H1 (cell line): ENCODE measurements at regions of chr15 and their contacts with region 1.

Region 1: DNA sequence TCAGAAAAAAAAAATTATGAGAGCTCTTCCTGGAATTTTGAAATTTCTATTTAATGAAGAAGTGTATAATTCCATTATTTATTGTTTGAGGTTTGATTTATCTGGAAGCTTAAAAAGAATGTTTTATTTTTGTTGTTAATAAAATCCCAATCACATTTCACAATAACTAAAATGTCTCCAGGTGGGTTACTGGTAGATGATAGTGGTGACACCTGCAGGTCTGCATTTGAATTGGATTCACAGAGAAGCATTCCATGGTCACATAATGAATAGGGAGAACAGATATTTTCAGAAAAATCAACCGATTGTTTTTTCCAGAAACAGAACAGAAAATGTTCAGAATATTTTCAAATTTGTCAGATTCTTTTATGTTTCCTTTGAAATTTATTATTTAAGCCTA is 48.3 kb downstream of the ASB7 start:
- DNase-seq: no peak
- H3K4me3 ChIP-seq: no peak overlapping the region
- H3K27ac ChIP-seq: no peak overlapping the region
- H3K4me1 ChIP-seq: peaks cover 0 to 3% (median 1%) of the 10 kb centered on the region in 4 experiments; a peak in 1 of 7 replicates
- H3K27me3 ChIP-seq: no peaks in the 10 kb centered on the region
- CTCF ChIP-seq: peak in 2 of 3 experiments; percentile 18 to 38; a peak in 2 of 4 replicates
- EP300 ChIP-seq: no peak
- POLR2A ChIP-seq: no peak
- RAD21 ChIP-seq: peak; percentile 29 to 41; a peak in 3 of 4 replicates

Region 2: DNA sequence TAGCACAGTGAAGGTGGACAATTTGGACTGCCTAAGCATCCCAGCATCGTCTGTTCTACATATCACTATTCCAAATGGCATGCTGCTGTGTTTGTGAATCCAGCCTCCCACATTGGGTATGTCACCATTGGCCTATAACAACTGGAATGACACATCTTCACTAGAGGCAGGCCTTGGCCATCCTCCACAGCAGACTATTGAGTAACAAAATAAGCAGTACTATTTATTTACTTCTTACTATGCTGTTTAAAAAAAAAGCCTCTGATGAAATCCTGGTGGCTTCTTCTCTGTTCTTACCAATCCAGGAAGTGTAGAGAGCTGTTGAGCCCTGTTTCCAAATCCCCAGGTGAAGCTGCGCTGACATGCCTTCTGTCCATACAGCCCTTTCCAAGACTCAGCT is 91.4 kb before region 1 on chr15:
- CTCF ChIA-PET with region 1: no interaction called
- POLR2A ChIA-PET with region 1: no interaction called
- DNase-seq: no peak
- H3K4me3 ChIP-seq: no peak overlapping the region
- H3K27ac ChIP-seq: no peak overlapping the region
- H3K4me1 ChIP-seq: no peaks in the 10 kb centered on the region
- H3K27me3 ChIP-seq: no peaks in the 10 kb centered on the region
- CTCF ChIP-seq: no peak
- EP300 ChIP-seq: no peak
- POLR2A ChIP-seq: no peak
- RAD21 ChIP-seq: no peak

Region 3: GRCh38 chr15:100580414-100580813 is 70.3 kb before region 1 on chr15:
- CTCF ChIA-PET with region 1: no interaction called
- POLR2A ChIA-PET with region 1: no interaction called
- DNase-seq: no peak
- H3K4me3 ChIP-seq: no peak overlapping the region
- H3K27ac ChIP-seq: no peak overlapping the region
- H3K4me1 ChIP-seq: no peaks in the 10 kb centered on the region
- H3K27me3 ChIP-seq: no peaks in the 10 kb centered on the region
- CTCF ChIP-seq: no peak
- EP300 ChIP-seq: no peak
- POLR2A ChIP-seq: no peak
- RAD21 ChIP-seq: no peak

Region 4: GRCh38 chr15:100627789-100628395 is 22.8 kb before region 1 on chr15:
- CTCF ChIA-PET with region 1: interaction called, 15 read pairs
- POLR2A ChIA-PET with region 1: no interaction called
- DNase-seq: peak; percentile 38 to 74
- H3K4me3 ChIP-seq: no peak overlapping the region
- H3K27ac ChIP-seq: no peak overlapping the region
- H3K4me1 ChIP-seq: no peaks in the 10 kb centered on the region; a peak in 1 of 7 replicates
- H3K27me3 ChIP-seq: no peaks in the 10 kb centered on the region
- CTCF ChIP-seq: peak; percentile 39 to 82 (median 69)
- EP300 ChIP-seq: no peak
- POLR2A ChIP-seq: no peak
- RAD21 ChIP-seq: peak; percentile 88 to 91

Region 5: DNA sequence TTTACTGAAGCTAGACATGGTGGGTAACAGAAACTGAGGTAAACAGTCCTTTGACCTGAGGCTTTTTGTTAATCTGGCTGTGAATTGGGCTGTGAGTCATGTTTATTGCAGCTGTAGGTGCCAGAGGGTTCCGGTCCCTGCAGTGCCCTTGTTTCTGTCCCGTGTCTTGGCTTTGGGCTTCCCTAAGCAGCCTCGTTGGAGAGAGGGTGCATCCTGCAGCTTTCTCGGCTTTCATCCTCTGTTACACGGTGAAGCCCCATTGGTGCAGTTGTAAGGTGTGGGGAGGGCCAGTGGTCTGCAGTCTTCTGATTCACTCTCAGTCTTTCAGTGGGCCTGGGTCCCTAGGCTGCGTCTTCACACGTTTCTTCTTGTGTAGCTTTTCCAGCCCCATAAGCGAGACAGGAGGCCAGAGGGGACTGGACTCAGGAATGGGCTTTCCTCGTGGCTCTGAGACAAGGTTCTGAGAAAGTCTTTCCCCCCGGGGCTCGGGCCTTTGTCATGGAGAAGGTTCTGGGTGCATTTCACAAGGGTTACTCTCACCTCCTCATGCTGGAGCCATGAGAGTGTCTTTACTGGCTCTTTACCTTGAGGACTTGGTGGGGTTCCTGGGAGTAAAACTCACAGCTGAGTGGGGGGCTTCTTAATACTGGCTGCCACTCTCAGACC is 15.1 kb before region 1 on chr15:
- CTCF ChIA-PET with region 1: interaction called, 23 read pairs
- POLR2A ChIA-PET with region 1: interaction called, 3 read pairs
- DNase-seq: peak in 1 of 2 experiments; percentile 15
- H3K4me3 ChIP-seq: no peak overlapping the region
- H3K27ac ChIP-seq: no peak overlapping the region
- H3K4me1 ChIP-seq: peaks cover 4 to 10% (median 6%) of the 10 kb centered on the region in 4 experiments; a peak in 5 of 7 replicates
- H3K27me3 ChIP-seq: no peaks in the 10 kb centered on the region
- CTCF ChIP-seq: no peak
- EP300 ChIP-seq: no peak
- POLR2A ChIP-seq: no peak
- RAD21 ChIP-seq: no peak